WTC11 (cell line): ENCODE measurements at regions of chr1 and their contacts with region 1.

Region 1: DNA sequence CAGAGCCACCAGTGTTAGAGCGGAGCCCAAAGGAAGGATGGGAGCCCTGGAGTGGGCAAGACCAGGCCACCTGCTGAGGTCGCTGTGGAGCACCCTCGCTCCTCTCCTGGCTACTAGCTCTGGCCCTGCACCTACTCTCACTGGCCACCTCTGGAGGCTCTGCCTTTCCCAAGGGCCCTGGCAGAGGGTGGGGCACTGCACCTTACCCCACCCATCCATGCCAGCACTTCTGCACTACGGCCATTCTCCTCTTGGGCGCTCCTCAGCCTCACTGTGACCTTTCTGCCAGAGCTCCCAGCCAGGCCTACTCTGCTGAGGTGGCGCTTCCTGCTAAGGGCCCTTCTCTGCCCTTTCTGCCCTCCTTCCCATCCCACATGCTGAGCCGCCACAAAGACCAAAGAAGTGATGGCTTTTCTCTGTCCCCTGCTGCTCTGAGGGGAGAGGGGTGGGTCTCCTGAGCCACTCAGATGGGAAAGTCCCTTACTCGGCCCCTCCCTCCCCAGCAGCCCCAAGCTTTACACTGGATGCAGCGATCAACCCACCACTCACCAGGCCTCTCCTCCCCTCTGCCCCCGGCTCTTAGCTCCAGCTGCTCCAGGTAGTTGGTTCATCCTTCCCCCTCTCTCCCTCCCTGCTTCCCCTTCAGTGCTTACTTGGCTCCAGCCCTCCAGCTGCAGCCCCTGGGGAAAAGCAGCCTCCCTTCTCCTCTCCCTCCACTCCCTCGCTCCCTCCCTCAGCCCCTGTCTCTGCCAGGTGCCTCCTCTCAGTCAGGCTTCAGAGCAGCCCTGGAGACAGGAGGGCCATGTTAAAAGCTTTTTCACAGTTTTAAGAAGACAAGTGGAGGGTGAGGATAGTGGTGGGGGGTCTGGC is 14.8 kb upstream of the TMEM222 start:
- DNase-seq: peak; percentile 67
- ATAC-seq: peak; percentile 85
- H3K4me3 Mint-ChIP-seq: peak overlapping the region; percentile 50
- H3K27ac Mint-ChIP-seq: peak overlapping the region; percentile 79
- H3K4me1 Mint-ChIP-seq: peaks cover 25% of the 10 kb centered on the region
- H3K27me3 Mint-ChIP-seq: peaks cover 4% of the 10 kb centered on the region
- CTCF ChIP-seq: no peak

Region 2: DNA sequence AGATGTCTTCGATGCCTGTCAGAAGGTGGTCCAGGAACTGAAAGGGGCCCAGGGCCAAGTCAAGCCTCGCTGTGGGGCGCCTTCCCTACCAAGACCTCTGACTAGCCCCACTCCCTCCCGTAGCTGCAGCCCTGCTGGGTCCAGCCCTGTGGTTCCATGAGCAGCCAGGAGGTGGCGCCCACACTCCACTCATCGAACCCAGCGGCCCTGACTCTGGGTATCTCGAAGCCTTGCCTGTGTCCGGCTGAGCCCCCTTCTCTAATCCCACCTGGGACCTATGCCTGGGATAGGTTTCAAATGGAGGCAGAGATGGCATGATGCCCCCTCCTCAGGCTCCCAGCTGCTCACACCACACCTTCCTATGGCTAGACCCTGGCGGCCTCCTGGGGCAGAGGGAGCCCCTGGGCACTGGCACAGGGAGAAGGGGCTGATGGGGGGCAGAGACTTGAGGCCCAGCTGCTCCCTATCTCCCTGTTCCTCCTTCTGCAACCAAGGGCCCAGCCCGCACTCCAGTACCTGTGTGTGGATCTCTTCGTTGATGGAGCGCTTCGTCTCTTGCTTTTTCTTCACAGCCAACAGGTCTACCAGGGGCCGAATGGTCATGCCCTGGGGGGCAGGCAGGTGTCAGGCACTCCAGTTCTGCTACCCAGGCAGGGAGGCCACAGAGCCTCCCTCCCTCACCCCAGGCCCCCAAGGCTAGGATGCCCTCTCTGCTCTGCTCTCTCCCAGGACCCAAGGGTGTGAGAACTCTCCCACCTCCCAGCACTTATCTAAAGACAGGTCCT is 204.2 kb before region 1 on chr1:
- CTCF ChIA-PET with region 1: interaction called, 13 read pairs
- POLR2A ChIA-PET with region 1: no interaction called
- DNase-seq: peak; percentile 95
- ATAC-seq: peak; percentile 84
- H3K4me3 Mint-ChIP-seq: no peak overlapping the region
- H3K27ac Mint-ChIP-seq: no peak overlapping the region
- H3K4me1 Mint-ChIP-seq: peaks cover 29% of the 10 kb centered on the region
- H3K27me3 Mint-ChIP-seq: no peaks in the 10 kb centered on the region; the same call in 1 of the 2 replicates
- CTCF ChIP-seq: peak; percentile 99

Region 3: GRCh38 chr1:27275696-27276095 is 31.4 kb before region 1 on chr1:
- CTCF ChIA-PET with region 1: no interaction called
- POLR2A ChIA-PET with region 1: no interaction called
- DNase-seq: no peak
- ATAC-seq: no peak
- H3K4me3 Mint-ChIP-seq: no peak overlapping the region
- H3K27ac Mint-ChIP-seq: no peak overlapping the region
- H3K4me1 Mint-ChIP-seq: no peaks in the 10 kb centered on the region
- H3K27me3 Mint-ChIP-seq: peaks cover 3% of the 10 kb centered on the region; the same call in 1 of the 2 replicates
- CTCF ChIP-seq: no peak

Region 4: DNA sequence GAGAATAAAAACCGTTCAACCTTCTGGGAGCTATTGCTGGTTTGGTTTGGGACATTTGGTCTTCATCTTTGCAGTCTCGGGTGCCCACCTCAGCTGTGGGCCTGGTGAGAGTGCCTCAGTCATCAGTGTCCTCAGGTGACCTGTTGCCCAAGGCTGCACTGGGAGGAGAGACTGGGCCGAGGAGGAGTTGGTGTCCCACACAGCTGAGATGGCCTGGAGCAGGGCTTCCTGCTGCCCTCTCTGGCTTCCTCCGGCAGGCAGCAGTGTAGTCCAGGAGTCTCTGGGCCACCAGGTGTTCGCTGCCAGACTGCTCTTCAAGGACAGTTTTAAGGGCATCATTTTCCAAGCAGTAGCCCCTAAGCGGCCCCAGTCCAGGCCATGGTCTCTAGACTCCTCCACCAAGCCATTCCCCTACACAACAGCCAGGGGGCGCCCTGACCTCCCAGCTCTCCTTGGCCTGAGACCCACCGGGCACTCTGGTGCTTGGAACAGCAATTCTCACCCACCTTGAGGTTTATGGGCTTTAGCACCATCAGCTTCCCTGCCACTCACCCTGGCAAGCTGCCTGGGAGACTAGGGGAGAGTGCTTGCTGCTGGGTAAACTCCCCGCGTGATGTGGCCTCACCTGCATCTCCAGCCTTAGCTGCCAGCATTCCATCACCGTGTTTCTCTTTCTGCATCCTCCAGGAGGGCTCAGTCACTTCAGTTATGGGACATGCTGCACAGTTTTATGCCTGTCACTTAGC is 25.6 kb after region 1 on chr1:
- CTCF ChIA-PET with region 1: interaction called, 70 read pairs
- POLR2A ChIA-PET with region 1: no interaction called
- DNase-seq: peak; percentile 80
- ATAC-seq: peak; percentile 92
- H3K4me3 Mint-ChIP-seq: no peak overlapping the region
- H3K27ac Mint-ChIP-seq: no peak overlapping the region; the same call in 1 of the 2 replicates
- H3K4me1 Mint-ChIP-seq: no peaks in the 10 kb centered on the region
- H3K27me3 Mint-ChIP-seq: no peaks in the 10 kb centered on the region; the same call in 1 of the 2 replicates
- CTCF ChIP-seq: peak; percentile 88

Region 5: GRCh38 chr1:27349784-27350662 is 42.9 kb after region 1 on chr1:
- CTCF ChIA-PET with region 1: interaction called, 100 read pairs
- POLR2A ChIA-PET with region 1: interaction called, 11 read pairs
- DNase-seq: peak; percentile 80
- ATAC-seq: peak; percentile 41
- H3K4me3 Mint-ChIP-seq: peak overlapping the region; percentile 75
- H3K27ac Mint-ChIP-seq: no peak overlapping the region
- H3K4me1 Mint-ChIP-seq: peaks cover 18% of the 10 kb centered on the region
- H3K27me3 Mint-ChIP-seq: peaks cover 12% of the 10 kb centered on the region
- CTCF ChIP-seq: no peak

Region 6: DNA sequence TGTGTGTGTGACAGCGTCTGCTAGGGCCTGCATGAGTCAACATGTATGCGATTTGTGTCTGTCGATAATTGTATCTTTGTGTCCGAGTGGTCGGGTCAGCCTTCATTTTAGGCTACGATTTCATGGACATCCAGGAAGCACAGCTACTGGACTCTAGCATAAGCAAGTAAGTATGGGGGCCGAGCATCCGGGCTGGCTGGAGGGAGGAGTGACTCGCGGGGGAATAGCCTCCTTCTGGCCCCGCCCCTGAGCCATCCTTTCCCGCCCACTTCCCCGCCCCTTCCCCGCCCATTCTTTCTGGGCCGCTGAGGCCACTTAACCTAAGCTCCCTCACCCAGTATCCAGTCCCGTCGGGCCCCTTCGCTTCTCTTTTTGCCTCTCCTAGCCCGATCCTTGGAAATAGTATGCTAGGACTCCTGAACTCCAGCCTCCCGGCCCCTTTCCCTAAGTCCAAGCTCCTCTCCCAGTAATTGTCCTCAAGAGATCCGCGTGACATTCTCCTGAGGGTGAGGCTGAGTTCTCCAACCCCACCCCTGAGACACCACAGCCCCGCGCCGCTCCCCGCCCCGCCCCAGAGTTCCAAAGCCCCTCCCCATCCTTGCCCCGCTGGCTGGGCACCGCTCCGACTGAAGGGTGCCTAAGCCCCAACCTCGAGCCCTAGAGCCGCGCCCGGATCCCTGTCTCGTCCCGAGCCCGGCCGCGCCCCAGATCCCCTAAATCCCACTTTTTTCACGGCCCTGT is 58.4 kb after region 1 on chr1:
- CTCF ChIA-PET with region 1: interaction called, 50 read pairs
- POLR2A ChIA-PET with region 1: interaction called, 21 read pairs
- DNase-seq: peak; percentile 86
- ATAC-seq: peak; percentile 53
- H3K4me3 Mint-ChIP-seq: peak overlapping the region; percentile 84
- H3K27ac Mint-ChIP-seq: peak overlapping the region; percentile 97
- H3K4me1 Mint-ChIP-seq: peaks cover 25% of the 10 kb centered on the region
- H3K27me3 Mint-ChIP-seq: peaks cover 33% of the 10 kb centered on the region
- CTCF ChIP-seq: no peak

Region 7: GRCh38 chr1:27392096-27392777 is 85.1 kb after region 1 on chr1 and contains the start of gene GPR3:
- CTCF ChIA-PET with region 1: interaction called, 260 read pairs
- POLR2A ChIA-PET with region 1: no interaction called
- DNase-seq: peak; percentile 96
- ATAC-seq: peak; percentile 72
- H3K4me3 Mint-ChIP-seq: peak within 1 kb of the TSS; percentile 91
- H3K27ac Mint-ChIP-seq: peak within 1 kb of the TSS; percentile 95
- H3K4me1 Mint-ChIP-seq: peaks cover 24% of the 10 kb centered on the region
- H3K27me3 Mint-ChIP-seq: peaks cover 4% of the 10 kb centered on the region
- CTCF ChIP-seq: peak; percentile 20; the same call in 1 of the 2 replicates
- total RNA-seq, gene GPR3: 7.8 to 12.4 TPM (median 7.8 TPM) in 3 replicates